Pancreas (tissue), 10 donors: ENCODE measurements at regions of chr7 and their contacts with region 1.

Region 1: GRCh38 chr7:124790645-124791044 is 25.1 kb upstream of the GPR37 start:
- DNase-seq: no peak
- ATAC-seq: no peak
- H3K4me3 ChIP-seq: no peak overlapping the region
- H3K27ac ChIP-seq: no peak overlapping the region
- H3K4me1 ChIP-seq: no peaks in the 10 kb centered on the region
- H3K27me3 ChIP-seq: no peaks in the 10 kb centered on the region
- CTCF ChIP-seq: no peak

Region 2: DNA sequence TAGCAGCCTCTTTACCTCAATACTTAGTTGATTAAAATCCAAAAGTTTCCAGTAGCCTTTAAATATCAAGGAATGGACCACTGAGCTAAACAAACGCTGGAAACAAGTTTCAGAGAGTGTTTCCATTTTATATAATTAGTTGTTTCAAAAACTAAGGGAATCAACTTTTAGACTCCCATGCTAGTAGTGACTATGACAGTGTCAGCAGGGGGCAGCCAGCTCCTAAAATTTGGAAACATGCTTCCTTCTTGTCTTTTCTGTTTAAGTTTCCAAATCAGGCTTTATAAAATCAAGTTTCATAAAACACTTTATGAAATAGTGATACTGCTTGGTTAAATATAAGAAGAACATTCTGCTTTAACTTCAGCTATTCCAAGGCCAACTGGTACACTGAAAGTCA is 619.6 kb before region 1 on chr7:
- intact Hi-C with region 1: loop called in 1 of 3 experiments (anchors 10 kb)
- DNase-seq: peak in 1 of 6 donors; percentile 20
- ATAC-seq: peak in 1 of 4 donors; percentile 40
- H3K4me3 ChIP-seq: no peak overlapping the region
- H3K27ac ChIP-seq: no peak overlapping the region
- H3K4me1 ChIP-seq: no peaks in the 10 kb centered on the region
- H3K27me3 ChIP-seq: no peaks in the 10 kb centered on the region
- CTCF ChIP-seq: peak in 2 of 4 donors; percentile 10 to 12

Region 3: DNA sequence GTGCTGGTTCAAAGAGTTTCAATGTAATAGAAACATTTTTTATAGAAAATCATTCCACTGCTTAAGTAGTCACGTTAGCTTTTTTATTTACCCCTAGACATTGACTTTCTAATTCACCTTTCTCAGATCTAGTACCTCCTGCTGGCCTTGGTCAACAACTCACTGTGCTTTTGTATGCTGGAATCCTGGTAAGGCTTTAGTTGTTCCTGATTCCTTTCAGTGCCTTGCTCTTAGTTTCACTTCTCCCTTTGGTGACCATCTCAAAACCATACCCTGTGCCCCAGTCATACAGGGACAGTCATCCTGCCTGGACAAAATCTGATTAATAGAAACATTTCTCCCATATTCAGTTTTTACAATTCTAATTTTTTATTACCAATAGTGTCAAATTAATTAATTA is 155.2 kb before region 1 on chr7:
- intact Hi-C with region 1: no loop called
- DNase-seq: no peak
- ATAC-seq: no peak
- H3K4me3 ChIP-seq: no peak overlapping the region
- H3K27ac ChIP-seq: no peak overlapping the region
- H3K4me1 ChIP-seq: no peaks in the 10 kb centered on the region
- H3K27me3 ChIP-seq: no peaks in the 10 kb centered on the region
- CTCF ChIP-seq: no peak